GM10248 (cell line): ENCODE measurements at regions of chr3 and their contacts with region 1.

Region 1: GRCh38 chr3:20511863-20512505 is 326.0 kb upstream of the SGO1 start:
- DNase-seq: peak; percentile 18
- CTCF ChIP-seq: peak; percentile 77

Region 2: DNA sequence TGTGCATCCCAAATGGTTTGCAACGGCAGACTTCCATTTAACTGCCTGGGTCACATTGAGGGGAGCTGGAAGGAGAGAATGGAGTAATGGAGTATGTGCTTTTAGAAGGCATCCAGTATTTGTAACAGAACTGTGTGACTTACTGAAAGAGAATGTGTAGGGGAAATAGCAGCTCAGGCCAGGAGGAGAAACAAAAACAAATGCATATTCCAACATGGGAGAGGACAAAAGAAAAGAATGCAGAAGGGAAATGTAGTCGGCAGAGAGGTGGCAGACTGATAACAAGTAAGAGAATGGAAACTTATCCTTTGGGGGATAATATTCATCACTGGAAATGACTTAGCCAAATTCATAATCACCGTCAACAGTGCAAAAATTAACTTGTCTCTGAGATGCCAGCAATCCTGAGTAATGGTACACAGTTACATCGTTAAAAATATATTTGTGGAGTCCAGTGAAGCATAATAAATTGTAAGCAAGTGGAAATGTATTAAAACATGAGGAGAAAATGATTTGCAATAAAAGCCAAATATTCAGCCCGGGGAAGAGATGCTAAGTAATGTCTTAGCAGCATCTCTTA is 31.1 kb before region 1 on chr3:
- CTCF ChIA-PET with region 1: no interaction called
- POLR2A ChIA-PET with region 1: no interaction called
- DNase-seq: no peak
- CTCF ChIP-seq: no peak

Region 3: GRCh38 chr3:20523293-20523692 is 11.3 kb after region 1 on chr3:
- CTCF ChIA-PET with region 1: interaction called, 15 read pairs
- POLR2A ChIA-PET with region 1: no interaction called
- DNase-seq: no peak
- CTCF ChIP-seq: no peak

Region 4: DNA sequence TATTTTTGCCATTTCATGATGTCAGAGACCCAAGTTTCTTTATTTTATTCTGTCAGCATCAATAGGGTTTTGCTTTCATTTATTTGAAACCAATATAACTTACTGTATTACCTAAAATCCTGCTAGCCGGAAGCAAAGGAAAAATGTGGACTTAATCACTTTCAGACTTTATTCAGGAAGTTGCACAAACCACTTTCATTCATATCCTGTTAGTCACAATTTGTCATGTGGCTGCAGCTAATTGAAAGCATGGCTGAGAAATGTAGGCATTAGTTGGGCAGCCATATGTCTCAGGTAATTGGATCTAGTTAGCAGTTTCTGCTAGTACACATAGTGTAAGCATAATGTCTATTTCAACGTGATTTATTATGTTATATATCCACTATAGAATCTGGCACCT is 136.3 kb after region 1 on chr3:
- CTCF ChIA-PET with region 1: no interaction called
- POLR2A ChIA-PET with region 1: no interaction called
- DNase-seq: no peak
- CTCF ChIP-seq: no peak